ENCODE measurements at regions of chr3 and their contacts with region 1.

Region 1: DNA sequence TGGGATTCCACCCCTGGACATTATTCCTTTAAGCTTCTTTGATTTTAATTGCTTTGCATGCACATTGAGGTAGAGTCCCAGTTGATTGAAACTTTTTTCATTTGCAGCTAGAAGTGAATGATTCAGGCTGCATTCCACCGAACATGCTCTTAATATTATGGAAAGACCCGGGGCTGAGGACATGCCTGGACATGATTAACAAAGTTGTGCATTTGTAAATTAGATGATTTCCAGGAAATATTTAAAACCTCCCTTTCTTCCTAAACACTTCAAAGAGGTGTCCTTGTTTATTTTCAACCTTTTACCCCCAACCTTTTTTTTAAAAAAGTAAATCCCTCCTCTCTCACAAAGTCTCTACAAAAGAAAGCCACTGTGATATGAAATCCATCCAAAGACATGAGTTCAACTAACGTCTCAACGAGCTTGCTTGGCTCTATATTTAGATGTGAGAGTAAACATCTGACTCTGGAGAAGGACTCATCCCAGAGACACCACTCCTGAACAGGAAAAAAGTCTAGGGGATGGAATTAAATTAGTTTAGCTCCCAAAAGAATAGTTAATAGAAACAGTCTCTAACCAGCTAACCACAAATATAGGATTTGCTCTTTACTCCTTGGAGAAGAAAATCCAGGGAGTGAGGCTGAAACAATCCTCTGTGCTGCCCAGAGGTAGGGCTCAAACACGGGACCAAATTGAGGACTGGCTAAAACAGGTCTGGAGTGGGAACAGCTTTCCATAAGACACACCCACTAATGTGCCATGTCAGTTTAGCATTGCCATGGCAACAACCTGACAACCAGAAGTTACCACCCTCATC is 83.1 kb downstream of the XXYLT1 start:
- DNase-seq: no peak
- H3K4me3 ChIP-seq: no peak overlapping the region
- H3K27ac ChIP-seq: no peak overlapping the region
- H3K4me1 ChIP-seq: peaks cover 0 to 27% (median 19%) of the 10 kb centered on the region in 4 experiments
- H3K27me3 ChIP-seq: peaks cover 0 to 3% (median 0%) of the 10 kb centered on the region in 5 experiments

Region 2: DNA sequence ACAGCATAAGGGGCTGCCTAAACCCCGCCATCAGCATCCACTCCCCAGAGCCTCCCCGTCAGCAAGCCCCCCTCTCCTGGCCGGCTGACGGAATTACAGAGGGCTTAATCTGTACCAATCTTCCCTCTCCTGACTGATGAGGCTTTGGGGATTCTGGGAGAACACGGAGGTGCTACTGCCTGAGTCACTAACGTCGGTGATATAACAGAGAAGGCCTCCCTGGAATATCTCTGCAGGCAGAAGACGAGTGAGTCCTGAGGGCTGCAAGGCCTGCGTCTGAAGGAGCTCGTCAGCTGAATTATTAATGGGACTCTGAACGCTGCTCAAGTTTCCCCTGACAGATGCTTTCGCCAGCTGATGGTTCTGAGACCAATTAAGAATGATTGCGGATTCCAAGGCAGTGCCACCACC is 64.5 kb before region 1 on chr3:
- CTCF ChIA-PET with region 1: no interaction called
- POLR2A ChIA-PET with region 1: no interaction called
- DNase-seq: no peak
- H3K4me3 ChIP-seq: no peak overlapping the region
- H3K27ac ChIP-seq: no peak overlapping the region
- H3K4me1 ChIP-seq: peaks cover 0 to 46% (median 29%) of the 10 kb centered on the region in 4 experiments
- H3K27me3 ChIP-seq: no peaks in the 10 kb centered on the region

Region 3: DNA sequence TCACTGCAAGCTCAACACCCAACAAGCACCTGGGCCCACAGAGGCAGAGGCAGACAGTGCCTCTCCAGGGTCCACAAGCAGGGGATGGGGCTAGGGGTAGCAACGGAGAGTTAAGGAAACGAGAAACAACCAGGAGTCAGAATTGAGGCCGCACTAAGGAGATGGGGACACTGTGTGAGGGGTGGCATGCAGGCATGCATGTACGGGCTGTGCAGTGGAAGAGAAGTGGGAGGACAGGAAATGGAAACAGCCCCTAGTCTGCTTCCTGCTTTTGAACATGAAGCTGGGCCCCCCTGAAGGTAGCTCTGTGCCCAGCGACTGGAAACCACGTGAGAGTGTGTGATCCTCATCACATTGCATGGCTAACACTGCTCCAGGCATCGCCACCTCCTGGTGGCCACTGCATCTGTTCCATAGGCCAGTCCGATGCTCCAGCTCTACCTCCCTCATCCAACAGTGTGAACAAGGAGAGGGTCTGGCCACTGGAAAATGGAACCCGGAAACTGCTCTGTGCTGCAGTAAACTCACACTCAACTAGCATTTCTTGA is 39.2 kb after region 1 on chr3:
- CTCF ChIA-PET with region 1: interaction called, 10 read pairs
- POLR2A ChIA-PET with region 1: interaction called, 3 read pairs
- DNase-seq: peak in 2 of 3 donors; percentile 51 to 53
- H3K4me3 ChIP-seq: no peak overlapping the region
- H3K27ac ChIP-seq: no peak overlapping the region
- H3K4me1 ChIP-seq: peaks cover 3 to 38% (median 30%) of the 10 kb centered on the region in 4 experiments
- H3K27me3 ChIP-seq: no peaks in the 10 kb centered on the region

Region 4: DNA sequence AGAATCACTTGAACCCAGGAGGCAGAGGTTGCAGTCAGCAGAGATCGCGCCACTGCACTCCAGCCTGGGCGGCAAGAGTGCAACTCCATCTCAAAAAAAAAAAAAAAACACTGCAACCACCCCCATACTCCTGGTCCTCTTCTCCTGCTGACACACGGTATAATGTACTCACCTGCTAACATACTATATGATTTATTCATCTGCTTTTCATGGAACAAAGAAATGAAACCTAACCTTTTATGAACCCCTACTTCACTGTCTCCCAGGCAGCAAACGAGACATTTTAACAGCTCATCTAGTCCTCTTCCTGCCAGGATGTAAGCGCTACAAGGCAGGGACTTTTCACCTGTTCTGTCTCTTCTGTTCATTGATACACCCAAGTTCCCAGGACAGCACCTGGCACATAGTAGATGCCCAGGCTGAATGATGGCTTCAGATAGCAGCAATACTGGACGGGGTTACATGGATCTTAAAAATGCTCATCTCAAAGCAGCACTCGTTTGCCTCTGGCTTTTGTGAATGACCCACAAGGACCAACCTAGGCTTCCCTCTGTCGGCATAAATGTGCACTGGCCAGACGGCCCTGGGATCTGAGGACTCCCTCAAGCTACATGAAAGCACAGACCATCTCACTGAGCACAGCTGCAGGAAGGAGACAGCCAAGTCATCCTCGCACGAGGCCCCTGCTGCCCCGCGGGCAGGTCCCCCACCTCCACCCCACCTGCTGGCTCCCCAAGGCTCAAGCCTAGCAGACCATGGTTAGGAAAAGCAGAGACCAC is 62.8 kb after region 1 on chr3:
- CTCF ChIA-PET with region 1: interaction called, 16 read pairs
- POLR2A ChIA-PET with region 1: no interaction called
- DNase-seq: peak; percentile 74 to 85 (median 83)
- H3K4me3 ChIP-seq: peak overlapping the region in 3 of 7 experiments; percentile 16 to 57 (median 20)
- H3K27ac ChIP-seq: no peak overlapping the region
- H3K4me1 ChIP-seq: peaks cover 4 to 35% (median 25%) of the 10 kb centered on the region in 4 experiments
- H3K27me3 ChIP-seq: no peaks in the 10 kb centered on the region

Region 5: DNA sequence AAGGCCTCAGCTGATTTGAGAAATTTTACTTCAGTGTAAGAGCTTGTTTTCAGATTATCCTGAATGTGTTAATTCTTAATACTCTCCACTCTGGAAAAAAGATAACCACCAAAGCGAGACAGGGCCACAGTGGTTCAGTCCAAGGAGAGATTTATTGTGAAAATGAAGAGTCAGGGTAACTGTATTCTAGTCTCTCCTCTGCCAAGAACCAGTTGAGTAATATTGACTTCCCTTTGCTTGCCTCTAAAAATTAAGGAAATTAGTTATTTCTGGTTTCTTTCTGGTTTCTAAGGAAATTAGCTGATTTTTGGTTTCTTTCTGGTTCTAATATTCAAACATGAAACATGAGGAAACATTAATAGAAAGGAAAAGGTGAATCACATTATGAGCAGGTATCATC is 320.4 kb after region 1 on chr3:
- CTCF ChIA-PET with region 1: no interaction called
- POLR2A ChIA-PET with region 1: no interaction called
- DNase-seq: no peak
- H3K4me3 ChIP-seq: no peak overlapping the region
- H3K27ac ChIP-seq: no peak overlapping the region
- H3K4me1 ChIP-seq: peaks cover 0 to 8% (median 5%) of the 10 kb centered on the region in 4 experiments
- H3K27me3 ChIP-seq: no peaks in the 10 kb centered on the region

Measured in common myeloid progenitor, CD34-positive (primary cell).